ENCODE measurements at regions of chr7 and their contacts with region 1.

Region 1: DNA sequence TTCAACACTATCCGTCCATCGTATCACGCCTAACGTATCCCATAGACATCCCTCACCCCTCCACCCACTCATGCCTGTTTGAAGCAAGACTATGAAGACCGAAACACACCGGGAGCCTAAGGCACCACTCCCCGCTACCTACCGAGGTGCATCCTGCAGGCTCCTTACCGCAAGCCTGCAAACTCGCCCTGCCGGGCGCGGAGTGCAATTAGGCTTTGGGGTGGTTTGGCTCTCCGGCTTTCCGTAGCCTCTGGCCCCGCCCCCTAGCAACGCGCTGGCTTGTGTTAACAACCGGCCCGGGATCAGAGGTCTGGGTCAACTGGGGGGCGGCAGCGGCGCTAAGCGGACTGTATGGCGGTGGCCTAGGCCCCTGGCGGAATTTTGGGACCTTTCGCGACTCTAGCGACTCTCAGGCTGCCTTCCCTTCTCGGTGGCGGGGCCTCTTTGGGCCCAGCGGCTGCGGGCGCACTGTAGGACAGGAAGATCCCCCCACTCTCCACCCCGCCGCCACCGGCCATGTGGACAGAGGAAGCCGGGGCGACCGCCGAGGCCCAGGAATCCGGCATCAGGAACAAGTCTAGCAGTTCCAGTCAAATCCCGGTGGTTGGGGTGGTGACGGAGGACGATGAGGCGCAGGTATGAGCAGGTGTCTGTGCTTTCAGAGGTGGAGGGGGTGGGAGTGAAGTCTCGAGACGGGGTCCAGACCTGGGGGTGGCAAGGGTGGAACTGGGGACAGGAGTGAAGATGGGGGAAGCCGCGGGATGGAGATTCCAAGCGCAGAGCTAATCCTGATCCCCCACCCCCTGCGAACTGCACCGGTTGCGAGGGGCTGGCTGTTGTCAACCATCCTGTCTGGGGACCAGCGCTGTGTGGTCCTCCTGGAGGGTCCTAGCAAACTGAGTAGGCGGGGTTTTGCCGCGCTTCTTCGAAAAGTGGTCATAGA is at the start of gene CFAP69:
- DNase-seq: peak; percentile 84 to 94 (median 92)
- H3K4me3 ChIP-seq: peak within 1 kb of the TSS; percentile 59 to 99 (median 93)
- H3K27ac ChIP-seq: peak within 1 kb of the TSS in 11 of 59 donors; percentile 10 to 75 (median 58)
- H3K27me3 ChIP-seq: no peaks in the 10 kb centered on the region
- CTCF ChIP-seq: peak in 50 of 56 donors; percentile 14 to 66 (median 38)
- total RNA-seq, gene CFAP69: 7.1 to 31.7 (median 16.0) TPM

Region 2: DNA sequence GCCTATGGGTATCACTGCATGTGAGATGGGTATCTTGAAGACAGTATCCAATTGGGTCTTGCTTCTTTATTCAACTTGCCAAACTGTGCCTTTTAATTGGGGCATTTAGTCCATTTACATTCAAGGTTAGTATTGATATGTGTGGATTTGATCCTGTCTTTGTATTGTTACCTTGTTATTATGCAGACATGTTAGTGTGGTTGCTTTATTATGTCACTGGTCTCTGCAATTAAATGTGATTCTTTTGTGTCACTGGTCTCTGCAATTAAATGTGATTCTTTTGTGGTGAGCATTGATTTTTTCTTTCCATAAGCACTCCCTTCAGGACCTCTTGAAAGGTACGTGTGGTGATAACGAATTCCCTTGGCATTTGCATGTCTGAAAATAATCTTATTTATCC is 448.7 kb before region 1 on chr7:
- intact Hi-C with region 1: no loop called
- DNase-seq: no peak
- H3K4me3 ChIP-seq: no peak overlapping the region
- H3K27ac ChIP-seq: no peak overlapping the region
- H3K27me3 ChIP-seq: no peaks in the 10 kb centered on the region
- CTCF ChIP-seq: no peak

Region 3: DNA sequence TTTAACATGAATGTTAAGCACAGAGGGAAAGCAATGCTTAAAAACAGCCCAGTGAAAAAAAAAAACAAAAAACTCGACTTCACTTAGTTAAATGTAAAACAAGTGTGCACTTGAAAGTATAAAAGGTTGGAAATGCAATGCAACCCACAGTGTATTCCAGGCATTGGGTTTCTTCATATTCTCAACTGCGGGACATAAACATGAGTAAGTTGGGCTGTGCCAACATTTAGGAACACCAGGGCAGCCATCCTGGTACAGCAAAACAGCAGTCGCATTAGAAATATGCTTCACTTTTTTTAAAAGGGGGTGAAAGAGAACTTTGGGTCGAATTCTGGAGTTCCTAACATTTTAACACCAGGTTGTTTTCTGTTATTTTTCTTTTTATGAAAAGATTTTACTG is 90.0 kb before region 1 on chr7:
- intact Hi-C with region 1: loop called in 1 of 2 experiments (anchors 10 kb)
- DNase-seq: no peak
- H3K4me3 ChIP-seq: peak overlapping the region in 1 of 59 donors; percentile 64
- H3K27ac ChIP-seq: no peak overlapping the region
- H3K27me3 ChIP-seq: no peaks in the 10 kb centered on the region
- CTCF ChIP-seq: no peak

Region 4: DNA sequence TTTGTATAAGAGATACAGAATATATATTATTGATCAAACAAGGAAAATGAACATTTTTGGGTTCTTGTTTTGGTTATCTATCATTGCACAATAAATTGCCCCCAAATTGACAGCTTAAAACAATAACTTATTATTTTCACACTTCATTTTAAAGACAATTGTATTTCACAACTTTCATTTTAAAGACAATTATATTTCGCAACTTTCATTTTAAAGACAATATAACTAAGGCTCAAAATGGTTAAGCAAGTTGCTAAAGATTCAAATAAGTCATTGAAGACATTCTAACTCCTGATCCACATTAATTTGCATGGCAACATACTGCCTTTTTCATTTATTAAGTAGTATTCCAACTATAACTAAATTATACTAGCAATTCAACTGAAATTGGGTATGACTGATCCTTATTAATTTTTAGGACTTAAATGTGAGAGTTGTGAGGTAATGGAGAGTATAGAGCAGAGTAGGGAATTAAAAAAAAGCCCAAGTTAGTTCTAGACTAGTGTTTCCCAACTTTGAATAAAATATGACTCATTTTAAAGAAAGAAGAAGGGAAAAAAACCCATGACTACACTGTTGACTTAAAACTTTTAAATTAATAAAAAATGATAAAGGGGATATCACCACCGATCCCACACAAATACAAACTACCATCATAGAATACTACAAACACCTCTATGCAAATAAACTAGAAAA is 43.5 kb before region 1 on chr7:
- intact Hi-C with region 1: no loop called
- DNase-seq: no peak
- H3K4me3 ChIP-seq: no peak overlapping the region
- H3K27ac ChIP-seq: no peak overlapping the region
- H3K27me3 ChIP-seq: peaks cover 0 to 6% (median 0%) of the 10 kb centered on the region in 45 donors
- CTCF ChIP-seq: no peak

Region 5: GRCh38 chr7:90346336-90347125 is 101.4 kb after region 1 on chr7 and contains the start of gene GTPBP10:
- intact Hi-C with region 1: loop called (anchors 5 kb)
- DNase-seq: peak; percentile 85 to 95 (median 91)
- H3K4me3 ChIP-seq: peak within 1 kb of the TSS; percentile 64 to 98 (median 86)
- H3K27ac ChIP-seq: peak within 1 kb of the TSS in 58 of 59 donors; percentile 21 to 93 (median 79)
- H3K27me3 ChIP-seq: no peaks in the 10 kb centered on the region
- CTCF ChIP-seq: peak; percentile 50 to 92 (median 83)
- total RNA-seq, gene GTPBP10: 14.6 to 41.8 (median 31.1) TPM

Region 6: GRCh38 chr7:90403174-90404113 is 158.3 kb after region 1 on chr7 and contains the start of gene CLDN12:
- intact Hi-C with region 1: loop called in 1 of 2 experiments (anchors 5 kb)
- DNase-seq: peak; percentile 62 to 94 (median 88)
- H3K4me3 ChIP-seq: peak within 1 kb of the TSS; percentile 55 to 96 (median 76)
- H3K27ac ChIP-seq: peak within 1 kb of the TSS in 57 of 59 donors; percentile 35 to 98 (median 91)
- H3K27me3 ChIP-seq: no peaks in the 10 kb centered on the region
- CTCF ChIP-seq: peak in 16 of 56 donors; percentile 7 to 30 (median 13)
- total RNA-seq, gene CLDN12: 27.6 to 91.3 (median 51.6) TPM